Thyroid gland (tissue), 4 donors: ENCODE measurements at regions of chr19 and their contacts with region 1.

Region 1: GRCh38 chr19:12199757-12200419 is 37.0 kb downstream of the ZNF136 start:
- DNase-seq: peak; percentile 51 to 58
- H3K4me3 ChIP-seq: no peak overlapping the region
- H3K27ac ChIP-seq: peak overlapping the region; percentile 27 to 49 (median 34)
- H3K4me1 ChIP-seq: peaks cover 4 to 10% of the 10 kb centered on the region in 2 donors
- H3K27me3 ChIP-seq: no peaks in the 10 kb centered on the region
- CTCF ChIP-seq: no peak
- POLR2A ChIP-seq: no peak

Region 2: GRCh38 chr19:12224676-12225075 is 24.8 kb after region 1 on chr19:
- intact Hi-C with region 1: loop called (anchors 2 kb)
- DNase-seq: no peak
- H3K4me3 ChIP-seq: no peak overlapping the region
- H3K27ac ChIP-seq: no peak overlapping the region
- H3K4me1 ChIP-seq: peaks cover 4 to 7% of the 10 kb centered on the region in 2 donors
- H3K27me3 ChIP-seq: no peaks in the 10 kb centered on the region
- CTCF ChIP-seq: no peak
- POLR2A ChIP-seq: no peak

Region 3: GRCh38 chr19:12681074-12681951 is 481.4 kb after region 1 on chr19 and contains the start of gene DHPS:
- intact Hi-C with region 1: no loop called
- DNase-seq: peak; percentile 94
- H3K4me3 ChIP-seq: peak within 1 kb of the TSS; percentile 27 to 91 (median 77)
- H3K27ac ChIP-seq: peak within 1 kb of the TSS; percentile 89 to 98 (median 94)
- H3K4me1 ChIP-seq: peaks cover 5 to 9% of the 10 kb centered on the region in 2 donors
- H3K27me3 ChIP-seq: no peaks in the 10 kb centered on the region
- CTCF ChIP-seq: peak in 1 of 6 experiments; percentile 19
- POLR2A ChIP-seq: peak in 1 of 2 donors; percentile 51
- total RNA-seq, gene DHPS: 105 to 122 (median 115) TPM